ENCODE measurements at regions of chr2 and their contacts with region 1.

Region 1: GRCh38 chr2:98835831-98836385 is 100.1 kb downstream of the CRACDL start:
- DNase-seq: no peak
- H3K4me3 ChIP-seq: no peak overlapping the region
- H3K27ac ChIP-seq: no peak overlapping the region
- H3K4me1 ChIP-seq: no peaks in the 10 kb centered on the region
- H3K27me3 ChIP-seq: peaks cover 4% of the 10 kb centered on the region
- CTCF ChIP-seq: no peak

Region 2: GRCh38 chr2:98412751-98413458 is 423.0 kb before region 1 on chr2:
- CTCF ChIA-PET with region 1: no interaction called
- POLR2A ChIA-PET with region 1: no interaction called
- intact Hi-C with region 1: loop called (anchors 5 kb)
- DNase-seq: peak; percentile 77
- H3K4me3 ChIP-seq: no peak overlapping the region
- H3K27ac ChIP-seq: no peak overlapping the region
- H3K4me1 ChIP-seq: no peaks in the 10 kb centered on the region
- H3K27me3 ChIP-seq: peaks cover 3% of the 10 kb centered on the region
- CTCF ChIP-seq: peak; percentile 76

Region 3: GRCh38 chr2:98649135-98649991 is 186.5 kb before region 1 on chr2:
- CTCF ChIA-PET with region 1: interaction called, 24 read pairs
- POLR2A ChIA-PET with region 1: no interaction called
- intact Hi-C with region 1: loop called (anchors 2 kb)
- DNase-seq: peak; percentile 82
- H3K4me3 ChIP-seq: no peak overlapping the region
- H3K27ac ChIP-seq: no peak overlapping the region
- H3K4me1 ChIP-seq: no peaks in the 10 kb centered on the region
- H3K27me3 ChIP-seq: peaks cover 8% of the 10 kb centered on the region
- CTCF ChIP-seq: peak; percentile 95

Region 4: GRCh38 chr2:98869940-98870263 is 34.0 kb after region 1 on chr2:
- CTCF ChIA-PET with region 1: no interaction called
- POLR2A ChIA-PET with region 1: no interaction called
- intact Hi-C with region 1: no loop called
- DNase-seq: no peak
- H3K4me3 ChIP-seq: no peak overlapping the region
- H3K27ac ChIP-seq: no peak overlapping the region
- H3K4me1 ChIP-seq: no peaks in the 10 kb centered on the region
- H3K27me3 ChIP-seq: no peaks in the 10 kb centered on the region
- CTCF ChIP-seq: no peak

Region 5: GRCh38 chr2:99066075-99066958 is 230.4 kb after region 1 on chr2:
- CTCF ChIA-PET with region 1: interaction called, 5 read pairs
- POLR2A ChIA-PET with region 1: no interaction called
- intact Hi-C with region 1: loop called (anchors 5 kb)
- DNase-seq: peak; percentile 51
- H3K4me3 ChIP-seq: no peak overlapping the region
- H3K27ac ChIP-seq: no peak overlapping the region
- H3K4me1 ChIP-seq: peaks cover 3% of the 10 kb centered on the region
- H3K27me3 ChIP-seq: peaks cover 7% of the 10 kb centered on the region
- CTCF ChIP-seq: peak; percentile 60

Measured in A673 (cell line).